ENCODE measurements at regions of chr19 and their contacts with region 1.

Region 1: DNA sequence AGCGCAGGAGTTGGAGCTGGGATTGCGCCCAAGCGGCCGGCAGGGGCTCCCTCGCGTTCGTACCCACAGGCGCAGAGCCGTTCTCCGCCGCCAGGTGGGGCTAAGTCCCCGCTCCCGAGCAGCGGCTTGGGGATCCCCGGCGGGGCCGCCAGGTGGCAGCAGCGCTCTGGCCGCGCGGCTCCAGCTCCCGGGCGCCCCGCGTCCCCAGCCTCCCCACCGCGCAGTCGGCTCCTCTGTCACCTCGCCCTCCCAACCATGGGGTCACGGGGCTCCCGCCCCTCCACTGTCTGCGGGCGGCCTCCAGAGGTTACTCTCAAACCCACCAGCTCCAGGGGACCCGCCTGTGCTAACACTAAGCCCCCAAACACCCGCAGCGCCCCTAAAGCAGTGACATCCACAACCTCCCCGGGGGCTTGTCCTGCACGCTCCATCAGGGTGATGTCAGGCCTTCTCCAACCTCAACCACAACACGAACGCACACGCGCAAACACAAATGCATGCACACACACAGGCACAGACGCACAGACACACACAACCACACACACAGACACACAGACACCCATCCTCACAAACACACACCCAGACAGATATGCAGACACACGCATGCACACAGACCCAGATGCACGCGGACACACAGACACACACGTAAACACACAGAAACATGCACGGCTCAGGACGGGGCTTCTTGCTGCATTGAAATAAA is 18.4 kb upstream of the KCTD15 start:
- H3K4me3 ChIP-seq: no peak overlapping the region
- H3K27ac ChIP-seq: no peak overlapping the region
- H3K4me1 ChIP-seq: peaks cover 4% of the 10 kb centered on the region
- CTCF ChIP-seq: peak; percentile 100

Region 2: DNA sequence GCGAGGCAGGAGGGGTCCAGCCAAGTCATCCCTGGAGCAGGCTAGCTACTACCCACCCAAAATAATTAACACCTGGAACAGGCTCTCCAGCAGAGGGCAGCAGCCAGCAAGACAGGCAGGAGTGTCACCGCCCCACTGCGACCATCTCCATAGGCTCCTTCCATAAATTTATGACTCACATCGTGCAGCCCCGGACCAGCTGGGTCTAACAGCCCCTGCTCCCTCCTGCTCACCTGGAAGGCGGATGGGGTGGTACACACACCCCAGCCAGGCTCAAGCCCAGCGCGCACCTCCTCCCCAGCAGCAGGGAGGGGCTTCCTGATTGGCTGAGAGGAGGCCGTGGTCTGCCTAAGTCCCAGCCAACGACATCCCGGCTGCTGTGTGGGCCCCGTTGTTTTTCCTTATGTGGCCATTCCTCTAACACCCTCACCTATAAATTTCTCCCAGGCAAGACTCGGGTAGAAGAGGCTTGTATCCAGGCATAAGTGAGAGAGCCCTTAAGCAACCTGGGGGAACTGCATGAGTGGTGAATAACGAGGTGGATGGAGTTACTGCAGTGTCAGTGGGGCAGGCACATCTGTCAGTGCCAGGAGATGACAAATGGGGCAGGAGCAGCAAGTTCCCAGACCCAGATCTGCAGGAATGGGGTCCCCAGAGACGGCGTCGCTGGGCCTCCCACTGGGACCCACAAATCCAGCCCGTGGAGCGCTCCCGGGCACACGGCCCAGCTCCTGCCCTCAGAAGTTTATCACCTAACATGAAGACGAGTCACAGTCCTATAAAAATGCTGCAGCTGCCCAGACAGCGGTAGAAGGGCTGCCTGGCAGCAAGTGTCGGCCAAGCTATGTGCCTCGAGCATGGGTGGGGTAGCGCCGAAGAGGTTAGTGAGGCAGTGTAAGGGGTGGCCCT is 361.7 kb before region 1 on chr19:
- CTCF ChIA-PET with region 1: interaction called, 272 read pairs
- POLR2A ChIA-PET with region 1: no interaction called
- H3K4me3 ChIP-seq: no peak overlapping the region
- H3K27ac ChIP-seq: peak overlapping the region; percentile 49; the same call in 1 of the 2 replicates
- H3K4me1 ChIP-seq: peaks cover 7% of the 10 kb centered on the region
- CTCF ChIP-seq: peak; percentile 98

Region 3: GRCh38 chr19:33639035-33639681 is 139.1 kb before region 1 on chr19:
- CTCF ChIA-PET with region 1: no interaction called
- POLR2A ChIA-PET with region 1: no interaction called
- H3K4me3 ChIP-seq: no peak overlapping the region
- H3K27ac ChIP-seq: peak overlapping the region; percentile 61; the same call in 1 of the 2 replicates
- H3K4me1 ChIP-seq: peaks cover 18% of the 10 kb centered on the region
- CTCF ChIP-seq: no peak

Region 4: DNA sequence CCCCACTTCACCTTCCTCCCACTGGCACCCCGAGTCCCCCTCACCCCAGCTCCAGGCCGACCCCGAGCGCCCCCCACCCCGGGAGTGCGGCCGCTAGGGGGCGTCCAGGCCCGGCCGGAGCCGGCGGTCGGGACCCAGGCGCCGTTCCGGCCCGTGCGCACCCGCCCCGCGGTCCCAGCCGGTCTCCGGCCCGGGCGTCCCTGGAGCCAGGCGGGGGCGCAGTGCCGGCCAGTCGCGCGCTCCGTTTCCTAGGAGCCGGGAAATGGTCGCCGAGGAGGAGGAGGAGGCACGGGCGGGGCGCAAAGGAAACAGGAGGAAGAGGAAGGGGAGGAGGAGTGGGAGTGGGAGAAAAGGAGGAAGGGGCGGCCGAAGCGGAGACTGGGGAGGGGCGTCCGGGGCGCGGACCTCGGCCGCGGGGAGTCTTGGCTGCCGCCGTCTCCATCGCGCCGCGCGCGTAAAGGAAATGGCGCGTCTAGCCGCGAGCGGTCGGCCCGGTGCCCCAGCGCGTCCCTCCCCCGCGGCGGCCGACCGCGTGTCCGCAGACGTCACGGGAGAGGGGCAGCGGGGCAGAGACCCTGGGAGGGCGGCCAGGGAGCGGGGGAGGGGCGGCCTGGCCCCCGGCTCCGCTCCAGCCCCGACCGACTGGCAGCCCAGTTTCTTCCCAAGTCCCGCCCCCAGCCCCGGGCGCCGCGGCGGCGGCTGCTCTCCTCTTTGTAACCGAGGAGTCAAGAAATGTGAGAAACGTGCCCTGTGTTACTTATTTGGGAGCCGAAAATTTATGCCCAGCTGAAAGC is 17.3 kb after region 1 on chr19:
- CTCF ChIA-PET with region 1: interaction called, 171 read pairs
- POLR2A ChIA-PET with region 1: interaction called, 12 read pairs
- H3K4me3 ChIP-seq: peak overlapping the region; percentile 63
- H3K27ac ChIP-seq: peak overlapping the region; percentile 100
- H3K4me1 ChIP-seq: peaks cover 18% of the 10 kb centered on the region
- CTCF ChIP-seq: peak; percentile 99

Region 5: GRCh38 chr19:33988586-33988985 is 210.3 kb after region 1 on chr19:
- CTCF ChIA-PET with region 1: interaction called, 18 read pairs
- POLR2A ChIA-PET with region 1: no interaction called
- H3K4me3 ChIP-seq: no peak overlapping the region
- H3K27ac ChIP-seq: no peak overlapping the region
- H3K4me1 ChIP-seq: no peaks in the 10 kb centered on the region
- CTCF ChIP-seq: no peak

Region 6: DNA sequence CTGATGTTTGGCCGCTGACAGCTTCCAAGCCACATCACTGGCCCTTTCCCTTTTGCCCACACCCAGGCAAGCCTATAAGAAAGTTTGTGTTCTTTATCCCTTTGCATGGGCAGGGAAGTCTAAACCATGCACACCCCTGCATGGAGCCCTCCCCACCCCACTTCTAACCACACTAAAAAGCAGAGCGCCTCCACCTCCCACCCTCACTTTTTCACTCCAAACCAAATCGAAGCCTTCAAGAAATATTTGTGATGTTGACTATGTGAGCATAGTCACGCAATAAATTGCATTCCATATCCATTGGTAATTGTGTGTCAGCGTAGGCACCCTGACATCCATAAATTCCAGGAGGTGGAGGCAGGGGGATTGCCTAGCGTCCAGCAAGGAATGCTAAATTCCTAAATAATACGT is 289.6 kb after region 1 on chr19:
- CTCF ChIA-PET with region 1: interaction called, 25 read pairs
- POLR2A ChIA-PET with region 1: no interaction called
- H3K4me3 ChIP-seq: no peak overlapping the region
- H3K27ac ChIP-seq: no peak overlapping the region
- H3K4me1 ChIP-seq: peaks cover 3% of the 10 kb centered on the region; the same call in 1 of the 2 replicates
- CTCF ChIP-seq: no peak

Region 7: GRCh38 chr19:34128558-34129250 is 350.5 kb after region 1 on chr19:
- CTCF ChIA-PET with region 1: interaction called, 14 read pairs
- POLR2A ChIA-PET with region 1: interaction called, 3 read pairs
- H3K4me3 ChIP-seq: no peak overlapping the region
- H3K27ac ChIP-seq: no peak overlapping the region
- H3K4me1 ChIP-seq: peaks cover 6% of the 10 kb centered on the region
- CTCF ChIP-seq: no peak

Region 8: GRCh38 chr19:34220472-34221063 is 442.3 kb after region 1 on chr19:
- CTCF ChIA-PET with region 1: interaction called, 10 read pairs
- POLR2A ChIA-PET with region 1: no interaction called
- H3K4me3 ChIP-seq: no peak overlapping the region
- H3K27ac ChIP-seq: no peak overlapping the region
- H3K4me1 ChIP-seq: peaks cover 39% of the 10 kb centered on the region
- CTCF ChIP-seq: peak; percentile 73

Measured in HEK293 (cell line).